ENCODE measurements at regions of chr2 and their contacts with region 1.

Region 1: DNA sequence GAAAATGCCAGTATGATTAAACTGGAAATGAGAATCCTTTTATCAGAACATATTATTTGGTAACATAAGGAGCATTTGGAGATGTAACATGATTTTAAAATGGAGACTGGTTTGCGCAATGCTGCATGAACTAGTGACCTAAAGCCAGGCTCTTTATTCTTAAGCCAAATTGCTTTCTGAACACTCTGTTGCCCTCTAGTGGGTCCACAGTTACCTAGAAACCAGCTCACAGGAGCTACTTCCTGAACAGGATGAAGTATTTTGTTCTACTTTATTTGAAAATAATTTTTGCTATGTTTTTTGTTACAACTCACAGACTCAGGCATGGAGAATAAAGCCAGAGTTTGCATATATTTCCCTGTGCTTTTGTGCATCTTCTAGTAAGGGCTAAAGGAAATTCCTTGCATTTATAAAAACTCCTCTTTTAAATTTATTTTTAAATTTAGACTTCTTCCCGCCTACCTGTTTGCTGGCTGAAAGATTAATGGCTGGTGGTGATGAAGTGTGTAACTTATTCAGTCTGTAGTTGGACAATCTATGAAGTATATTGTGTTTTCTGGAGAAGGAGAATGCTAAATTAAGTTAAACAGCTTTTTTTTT is 146.7 kb downstream of the PARD3B start:
- DNase-seq: peak in 1 of 2 experiments; percentile 9
- H3K4me3 ChIP-seq: no peak overlapping the region
- H3K27ac ChIP-seq: no peak overlapping the region
- H3K4me1 ChIP-seq: no peaks in the 10 kb centered on the region
- H3K27me3 ChIP-seq: no peaks in the 10 kb centered on the region
- CTCF ChIP-seq: peak in 2 of 3 experiments; percentile 71 to 72; a peak in 3 of 4 replicates
- EP300 ChIP-seq: no peak
- POLR2A ChIP-seq: no peak
- RAD21 ChIP-seq: peak; percentile 89 to 91

Region 2: GRCh38 chr2:204325468-204325867 is 366.5 kb before region 1 on chr2:
- CTCF ChIA-PET with region 1: interaction called, 16 read pairs
- POLR2A ChIA-PET with region 1: no interaction called
- DNase-seq: peak; percentile 44 to 67
- H3K4me3 ChIP-seq: no peak overlapping the region
- H3K27ac ChIP-seq: no peak overlapping the region
- H3K4me1 ChIP-seq: peaks cover 0 to 3% (median 0%) of the 10 kb centered on the region in 4 experiments; a peak in 2 of 7 replicates
- H3K27me3 ChIP-seq: no peaks in the 10 kb centered on the region
- CTCF ChIP-seq: peak; percentile 10 to 72 (median 71)
- EP300 ChIP-seq: no peak
- POLR2A ChIP-seq: no peak
- RAD21 ChIP-seq: peak; percentile 95 to 96

Region 3: GRCh38 chr2:204673877-204674276 is 18.1 kb before region 1 on chr2:
- CTCF ChIA-PET with region 1: interaction called, 13 read pairs
- POLR2A ChIA-PET with region 1: no interaction called
- DNase-seq: no peak
- H3K4me3 ChIP-seq: no peak overlapping the region
- H3K27ac ChIP-seq: no peak overlapping the region
- H3K4me1 ChIP-seq: peaks cover 0 to 11% (median 1%) of the 10 kb centered on the region in 4 experiments; a peak in 2 of 7 replicates
- H3K27me3 ChIP-seq: no peaks in the 10 kb centered on the region
- CTCF ChIP-seq: no peak
- EP300 ChIP-seq: no peak
- POLR2A ChIP-seq: no peak
- RAD21 ChIP-seq: no peak